Activated naive CD4-positive, alpha-beta T cell treated with anti-CD3 and anti-CD28 coated beads for 36 hours (primary cell): ENCODE measurements at regions of chr6 and their contacts with region 1.

Region 1: DNA sequence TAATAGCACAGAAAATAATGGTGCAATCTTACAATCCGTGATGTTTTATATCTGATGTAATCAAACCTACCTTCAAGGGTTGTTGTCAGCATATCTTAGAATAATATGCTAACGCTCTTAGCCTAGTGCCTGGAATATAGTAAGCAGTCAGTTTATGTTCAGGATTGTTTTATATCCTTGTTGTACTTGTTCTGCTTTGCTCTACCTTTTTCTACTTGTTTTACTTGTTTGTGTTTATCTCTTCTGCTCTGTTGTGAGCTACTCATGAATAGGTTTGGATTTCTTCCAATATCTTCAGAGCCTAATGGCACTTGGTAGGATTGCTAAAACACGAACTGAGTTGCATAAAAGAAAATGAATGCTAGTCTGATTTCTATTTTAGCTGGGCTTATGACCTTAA is 40.1 kb downstream of the DNAH8 start:
- DNase-seq: no peak
- H3K4me3 Mint-ChIP-seq: no peak overlapping the region
- H3K27ac Mint-ChIP-seq: peak overlapping the region; percentile 79
- H3K4me1 Mint-ChIP-seq: peaks cover 39% of the 10 kb centered on the region
- H3K27me3 Mint-ChIP-seq: peaks cover 2% of the 10 kb centered on the region

Region 2: DNA sequence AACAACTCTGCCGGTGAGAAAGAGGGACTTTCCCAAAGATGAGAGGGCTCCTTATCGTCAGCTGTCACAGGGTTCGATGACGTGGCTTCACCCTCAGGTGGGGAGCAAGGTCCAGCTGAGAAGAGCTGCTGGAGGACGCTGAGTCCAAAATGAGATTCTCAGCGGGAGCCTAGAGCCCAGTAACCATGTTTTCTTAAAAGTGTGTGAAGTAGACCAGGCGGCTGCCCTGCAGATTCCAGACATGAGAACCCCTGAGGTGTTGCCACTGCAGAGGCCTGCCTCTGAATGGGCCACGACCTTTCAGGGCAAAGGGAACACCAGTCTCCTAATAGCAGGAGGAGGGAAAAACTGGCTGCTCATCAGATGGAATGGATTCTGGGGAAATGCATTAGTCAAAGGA is 490.6 kb before region 1 on chr6:
- CTCF ChIA-PET with region 1: no interaction called
- intact Hi-C with region 1: no loop called
- DNase-seq: no peak
- H3K4me3 Mint-ChIP-seq: no peak overlapping the region
- H3K27ac Mint-ChIP-seq: no peak overlapping the region
- H3K4me1 Mint-ChIP-seq: peaks cover 17% of the 10 kb centered on the region
- H3K27me3 Mint-ChIP-seq: no peaks in the 10 kb centered on the region

Region 3: DNA sequence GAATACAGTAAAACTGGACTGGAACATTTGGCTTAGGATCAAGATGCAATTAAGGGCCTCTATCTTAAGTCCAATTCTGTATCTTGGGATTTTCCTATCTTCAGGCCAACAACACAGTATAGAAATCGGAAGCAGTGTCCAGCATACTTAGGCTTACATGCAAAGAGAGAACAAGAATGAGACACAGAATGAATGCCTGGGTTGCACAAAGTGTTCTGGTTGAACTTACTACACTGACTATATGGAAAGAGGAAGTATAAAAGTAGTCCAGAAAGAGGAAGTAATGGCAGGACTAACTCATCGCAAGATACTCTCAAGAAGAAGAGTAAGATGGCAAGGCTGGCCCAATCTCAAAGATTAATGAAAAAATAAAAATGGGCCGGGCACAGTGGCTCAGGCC is 203.1 kb before region 1 on chr6:
- CTCF ChIA-PET with region 1: no interaction called
- intact Hi-C with region 1: no loop called
- DNase-seq: no peak
- H3K4me3 Mint-ChIP-seq: no peak overlapping the region
- H3K27ac Mint-ChIP-seq: no peak overlapping the region
- H3K4me1 Mint-ChIP-seq: peaks cover 12% of the 10 kb centered on the region
- H3K27me3 Mint-ChIP-seq: no peaks in the 10 kb centered on the region

Region 4: GRCh38 chr6:38713812-38714211 is 41.4 kb before region 1 on chr6:
- CTCF ChIA-PET with region 1: no interaction called
- intact Hi-C with region 1: loop called (anchors 5 kb)
- DNase-seq: peak; percentile 77
- H3K4me3 Mint-ChIP-seq: no peak overlapping the region
- H3K27ac Mint-ChIP-seq: no peak overlapping the region
- H3K4me1 Mint-ChIP-seq: peaks cover 17% of the 10 kb centered on the region
- H3K27me3 Mint-ChIP-seq: peaks cover 18% of the 10 kb centered on the region

Region 5: GRCh38 chr6:38730140-38730862 is 24.9 kb before region 1 on chr6:
- CTCF ChIA-PET with region 1: no interaction called
- intact Hi-C with region 1: no loop called
- DNase-seq: no peak
- H3K4me3 Mint-ChIP-seq: no peak overlapping the region
- H3K27ac Mint-ChIP-seq: no peak overlapping the region
- H3K4me1 Mint-ChIP-seq: peaks cover 6% of the 10 kb centered on the region
- H3K27me3 Mint-ChIP-seq: peaks cover 4% of the 10 kb centered on the region

Region 6: DNA sequence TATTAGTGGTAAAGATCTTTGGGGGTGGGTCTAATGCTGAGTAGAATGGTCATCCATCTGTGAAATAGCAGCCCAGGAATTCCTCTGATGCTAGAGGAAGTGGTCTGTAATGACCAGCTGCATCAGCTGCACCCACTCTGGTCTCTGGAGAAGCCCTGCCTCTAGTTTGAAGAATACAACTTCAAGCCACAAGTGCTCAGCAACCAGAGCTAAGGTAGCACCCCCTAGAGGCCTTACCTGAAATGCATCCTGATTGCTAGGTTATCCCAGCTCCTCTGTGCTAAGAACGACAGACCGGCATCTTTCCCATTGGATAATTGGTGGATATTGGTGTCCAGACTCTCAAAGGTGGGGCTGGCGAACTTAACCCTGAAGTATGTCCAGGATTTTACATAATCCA is 18.2 kb after region 1 on chr6:
- CTCF ChIA-PET with region 1: no interaction called
- intact Hi-C with region 1: loop called (anchors 2 kb)
- DNase-seq: peak; percentile 62
- H3K4me3 Mint-ChIP-seq: no peak overlapping the region
- H3K27ac Mint-ChIP-seq: no peak overlapping the region
- H3K4me1 Mint-ChIP-seq: peaks cover 16% of the 10 kb centered on the region
- H3K27me3 Mint-ChIP-seq: peaks cover 19% of the 10 kb centered on the region